H1 (cell line): ENCODE measurements at regions of chr2 and their contacts with region 1.

Region 1: DNA sequence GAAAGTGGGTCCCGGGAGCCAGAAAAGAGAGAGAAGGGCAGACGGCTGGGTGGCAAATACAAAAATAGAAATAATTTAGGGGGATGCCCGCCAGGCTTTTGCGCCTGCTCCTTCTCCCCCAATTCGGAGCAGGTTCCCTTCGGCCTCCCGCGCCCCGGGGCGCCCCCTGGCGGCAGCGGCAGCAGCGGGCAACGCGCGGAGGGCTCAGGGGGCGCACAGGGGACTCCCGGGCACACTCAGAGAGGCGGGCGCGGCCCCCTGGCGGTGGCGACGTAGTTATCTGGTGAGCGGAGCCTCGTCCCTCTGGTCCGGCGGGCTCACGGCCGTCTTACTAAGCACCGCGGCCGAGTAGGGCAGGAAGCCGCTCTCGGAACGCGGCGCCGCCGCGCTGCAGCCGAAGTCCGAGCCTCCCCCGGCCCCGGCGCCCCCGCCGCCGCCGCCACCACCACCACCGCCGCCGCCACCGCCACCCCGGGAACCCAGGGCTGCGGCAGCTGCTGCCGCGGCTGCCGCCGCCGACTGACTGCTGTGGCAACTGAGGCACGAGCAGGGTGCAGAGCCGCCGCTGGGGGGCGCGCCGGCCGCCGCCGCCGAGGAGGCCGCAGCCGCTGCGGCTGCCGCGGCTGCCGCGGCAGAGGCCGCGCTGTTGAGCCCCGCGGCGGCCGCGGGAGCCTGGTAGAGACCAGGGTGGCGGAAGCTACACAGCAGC is 3.8 kb downstream of the EVX2 start:
- DNase-seq: peak in 1 of 2 experiments; percentile 92
- H3K4me3 ChIP-seq: peak overlapping the region; percentile 4 to 54 (median 20); a peak in 6 of 8 replicates
- H3K27ac ChIP-seq: no peak overlapping the region
- H3K4me1 ChIP-seq: peaks cover 0 to 29% (median 11%) of the 10 kb centered on the region in 4 experiments; a peak in 5 of 7 replicates
- H3K27me3 ChIP-seq: peaks cover 85 to 98% (median 92%) of the 10 kb centered on the region in 4 experiments
- CTCF ChIP-seq: peak in 2 of 3 experiments; percentile 83 to 99; a peak in 3 of 4 replicates
- EP300 ChIP-seq: no peak
- POLR2A ChIP-seq: no peak
- RAD21 ChIP-seq: peak; percentile 61 to 78

Region 2: GRCh38 chr2:175864137-175864850 is 215.7 kb before region 1 on chr2:
- CTCF ChIA-PET with region 1: no interaction called
- POLR2A ChIA-PET with region 1: no interaction called
- DNase-seq: no peak
- H3K4me3 ChIP-seq: no peak overlapping the region
- H3K27ac ChIP-seq: no peak overlapping the region
- H3K4me1 ChIP-seq: no peaks in the 10 kb centered on the region
- H3K27me3 ChIP-seq: no peaks in the 10 kb centered on the region
- CTCF ChIP-seq: peak in 2 of 3 experiments; percentile 23 to 28; a peak in 3 of 4 replicates
- EP300 ChIP-seq: no peak
- POLR2A ChIP-seq: no peak
- RAD21 ChIP-seq: peak in 1 of 2 experiments; percentile 23; a peak in 1 of 4 replicates

Region 3: DNA sequence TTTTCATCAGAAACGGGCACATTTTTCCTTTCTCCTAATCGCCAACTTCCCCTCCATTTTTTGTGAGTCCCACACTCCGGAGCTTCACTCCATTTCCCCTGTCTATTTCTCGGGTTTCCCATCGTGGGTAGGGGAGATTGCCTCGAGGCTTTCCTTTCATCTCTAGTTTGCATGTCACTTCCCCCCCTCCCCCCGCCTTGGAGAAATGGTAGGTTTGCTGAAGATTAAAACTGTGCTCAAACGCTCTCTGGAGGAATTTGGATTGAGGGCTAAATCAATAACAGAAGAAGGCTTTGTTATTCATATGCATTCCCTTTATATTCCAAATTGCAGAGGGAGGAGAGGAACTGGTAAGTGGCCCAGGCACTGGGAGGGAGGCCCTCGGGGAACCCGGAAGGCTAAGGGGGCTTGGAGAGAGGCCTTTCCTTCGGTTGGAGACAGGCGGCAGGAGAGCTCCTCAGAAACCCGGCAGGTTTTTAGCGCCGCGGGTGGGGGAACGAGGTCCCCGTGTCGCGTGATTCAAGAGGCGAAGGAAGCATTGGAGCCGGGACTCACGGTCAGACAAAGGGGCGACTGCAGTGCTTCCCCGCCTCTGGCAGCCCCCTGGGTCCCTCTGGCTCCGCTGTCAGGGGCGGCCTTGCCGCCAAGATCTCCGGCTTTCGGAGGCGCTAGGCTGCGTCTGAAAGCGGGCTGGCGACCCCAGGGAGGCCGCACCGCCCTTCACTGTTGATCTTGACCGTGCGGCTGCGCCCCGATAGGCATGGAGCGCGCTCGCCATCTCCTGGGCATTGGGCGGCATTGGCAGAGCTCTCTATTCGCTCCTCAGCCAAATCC is 17.2 kb after region 1 on chr2:
- CTCF ChIA-PET with region 1: interaction called, 130 read pairs
- POLR2A ChIA-PET with region 1: interaction called, 8 read pairs
- DNase-seq: peak; percentile 86 to 91
- H3K4me3 ChIP-seq: peak overlapping the region; percentile 1 to 54 (median 22); a peak in 6 of 8 replicates
- H3K27ac ChIP-seq: no peak overlapping the region
- H3K4me1 ChIP-seq: peaks cover 0 to 28% (median 16%) of the 10 kb centered on the region in 4 experiments; a peak in 6 of 7 replicates
- H3K27me3 ChIP-seq: peaks cover 79 to 98% (median 91%) of the 10 kb centered on the region in 4 experiments
- CTCF ChIP-seq: peak in 2 of 3 experiments; percentile 89 to 90; a peak in 3 of 4 replicates
- EP300 ChIP-seq: no peak
- POLR2A ChIP-seq: no peak
- RAD21 ChIP-seq: peak; percentile 93 to 95

Region 4: GRCh38 chr2:176104325-176105077 is 24.5 kb after region 1 on chr2:
- CTCF ChIA-PET with region 1: interaction called, 130 read pairs
- POLR2A ChIA-PET with region 1: no interaction called
- DNase-seq: no peak
- H3K4me3 ChIP-seq: peak overlapping the region in 1 of 4 experiments; percentile 50; a peak in 2 of 8 replicates
- H3K27ac ChIP-seq: no peak overlapping the region
- H3K4me1 ChIP-seq: peaks cover 0 to 27% (median 14%) of the 10 kb centered on the region in 4 experiments; a peak in 6 of 7 replicates
- H3K27me3 ChIP-seq: peaks cover 98 to 99% (median 99%) of the 10 kb centered on the region in 4 experiments
- CTCF ChIP-seq: no peak
- EP300 ChIP-seq: no peak
- POLR2A ChIP-seq: no peak
- RAD21 ChIP-seq: no peak

Region 5: DNA sequence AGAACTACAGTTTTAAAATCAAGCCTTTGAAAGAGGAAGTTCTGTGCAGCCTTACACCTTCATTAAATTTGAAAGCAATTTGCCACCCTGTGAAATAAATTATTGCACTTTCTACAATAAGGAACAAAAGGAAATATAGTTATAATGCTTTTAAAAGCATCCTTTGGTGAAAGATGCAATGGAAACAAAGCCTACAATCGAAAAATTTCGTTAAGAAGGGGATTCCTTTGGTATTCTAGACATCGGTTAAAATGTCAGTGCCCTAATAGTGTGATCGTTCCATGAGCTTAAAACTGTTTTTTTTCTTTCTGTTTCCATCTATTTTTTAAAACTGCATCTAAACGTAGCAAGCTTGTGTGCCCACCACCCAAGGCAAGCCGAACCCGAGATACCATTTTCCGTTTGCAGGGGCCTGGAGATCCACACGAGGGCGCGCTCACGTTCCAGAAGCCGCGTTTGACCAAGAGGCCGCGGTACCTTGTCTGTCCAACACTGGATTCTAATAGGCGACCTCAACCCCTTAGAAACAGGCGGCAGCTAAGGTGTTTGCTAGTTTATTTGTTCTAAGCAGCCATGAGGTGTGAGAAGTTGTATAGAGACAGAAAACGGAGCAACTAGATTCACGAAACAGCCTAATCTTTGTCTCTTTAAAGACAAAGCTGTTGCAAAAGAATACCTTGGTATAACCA is 31.1 kb after region 1 on chr2:
- CTCF ChIA-PET with region 1: interaction called, 13 read pairs
- POLR2A ChIA-PET with region 1: no interaction called
- DNase-seq: peak in 1 of 2 experiments; percentile 84
- H3K4me3 ChIP-seq: no peak overlapping the region
- H3K27ac ChIP-seq: no peak overlapping the region
- H3K4me1 ChIP-seq: peaks cover 0 to 9% (median 2%) of the 10 kb centered on the region in 4 experiments; a peak in 5 of 7 replicates
- H3K27me3 ChIP-seq: peaks cover 95 to 99% (median 98%) of the 10 kb centered on the region in 4 experiments
- CTCF ChIP-seq: peak; percentile 73 to 91 (median 86)
- EP300 ChIP-seq: no peak
- POLR2A ChIP-seq: no peak
- RAD21 ChIP-seq: peak; percentile 29 to 46; a peak in 3 of 4 replicates